ENCODE measurements at regions of chr11 and their contacts with region 1.

Region 1: GRCh38 chr11:119095066-119095880 is 6.4 kb downstream of the DPAGT1 start:
- DNase-seq: peak; percentile 99
- ATAC-seq: peak; percentile 80 to 92 (median 86)
- H3K4me3 ChIP-seq: peak overlapping the region; percentile 70
- H3K4me3 Mint-ChIP-seq: peak overlapping the region; percentile 91
- H3K27ac ChIP-seq: peak overlapping the region; percentile 84
- H3K27ac Mint-ChIP-seq: peak overlapping the region; percentile 95 to 96
- H3K4me1 ChIP-seq: peaks cover 32% of the 10 kb centered on the region
- H3K4me1 Mint-ChIP-seq: peaks cover 34 to 43% of the 10 kb centered on the region in 2 donors
- H3K27me3 ChIP-seq: no peaks in the 10 kb centered on the region
- H3K27me3 Mint-ChIP-seq: no peaks in the 10 kb centered on the region
- CTCF ChIP-seq: peak; percentile 3

Region 2: GRCh38 chr11:119030329-119031049 is 64.8 kb before region 1 on chr11 and contains the start of gene SLC37A4:
- intact Hi-C with region 1: loop called (anchors 2 kb)
- DNase-seq: peak; percentile 98 to 99
- ATAC-seq: peak; percentile 96 to 98 (median 97)
- H3K4me3 ChIP-seq: peak within 1 kb of the TSS; percentile 74
- H3K4me3 Mint-ChIP-seq: peak within 1 kb of the TSS; percentile 84
- H3K27ac ChIP-seq: peak within 1 kb of the TSS; percentile 55
- H3K27ac Mint-ChIP-seq: peak within 1 kb of the TSS; percentile 14 to 85
- H3K4me1 ChIP-seq: peaks cover 13% of the 10 kb centered on the region
- H3K4me1 Mint-ChIP-seq: peaks cover under 1 to 16% of the 10 kb centered on the region in 2 donors
- H3K27me3 ChIP-seq: no peaks in the 10 kb centered on the region
- H3K27me3 Mint-ChIP-seq: no peaks in the 10 kb centered on the region
- CTCF ChIP-seq: peak; percentile 82
- total RNA-seq, gene SLC37A4: 4.6 to 7.7 (median 6.5) TPM

Region 3: DNA sequence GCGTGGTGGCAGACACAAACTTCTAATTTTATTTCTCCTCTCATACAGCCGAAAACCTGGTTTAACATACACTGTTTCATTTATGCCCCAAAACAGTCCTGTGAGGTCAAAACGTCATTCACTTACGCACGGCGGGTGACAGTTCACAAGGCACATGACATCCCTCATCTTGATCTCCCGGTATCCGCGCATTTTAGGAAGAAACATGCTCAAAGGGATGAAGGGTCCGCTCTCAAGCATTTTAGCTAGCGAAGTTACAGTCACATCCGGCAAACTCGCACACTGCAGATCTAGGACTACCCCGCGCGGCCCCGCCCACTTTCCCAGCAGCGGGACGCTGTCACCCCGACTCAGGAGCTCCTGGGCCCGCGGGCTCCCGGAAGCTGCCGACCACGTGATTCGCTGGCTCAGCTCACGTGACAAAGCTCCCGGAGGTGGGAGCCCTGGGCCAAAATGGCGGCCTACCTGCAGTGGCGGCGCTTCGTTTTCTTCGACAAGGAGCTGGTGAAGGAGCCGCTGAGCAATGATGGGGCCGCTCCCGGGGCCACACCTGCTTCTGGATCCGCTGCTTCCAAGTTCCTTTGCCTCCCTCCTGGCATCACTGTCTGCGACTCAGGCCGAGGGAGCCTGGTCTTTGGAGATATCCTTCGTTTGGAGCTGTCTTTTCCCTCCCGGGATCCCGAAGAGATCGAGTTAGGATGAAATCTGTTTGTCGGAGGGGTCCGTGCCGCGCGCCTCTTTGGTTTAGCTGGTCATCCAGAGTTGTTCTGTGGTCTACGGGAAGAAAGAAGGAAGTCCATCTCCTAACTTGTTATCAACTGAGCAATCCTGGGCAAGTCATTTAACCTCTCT is 27.7 kb before region 1 on chr11 and contains the start of gene VPS11:
- intact Hi-C with region 1: loop called (anchors 2 kb)
- DNase-seq: peak; percentile 95 to 99
- ATAC-seq: peak; percentile 92 to 99 (median 93)
- H3K4me3 ChIP-seq: peak within 1 kb of the TSS; percentile 91
- H3K4me3 Mint-ChIP-seq: peak within 1 kb of the TSS; percentile 95
- H3K27ac ChIP-seq: peak within 1 kb of the TSS; percentile 89
- H3K27ac Mint-ChIP-seq: peak within 1 kb of the TSS; percentile 98 to 99
- H3K4me1 ChIP-seq: peaks cover 19% of the 10 kb centered on the region
- H3K4me1 Mint-ChIP-seq: peaks cover 32 to 33% of the 10 kb centered on the region in 2 donors
- H3K27me3 ChIP-seq: no peaks in the 10 kb centered on the region
- H3K27me3 Mint-ChIP-seq: no peaks in the 10 kb centered on the region
- CTCF ChIP-seq: no peak
- total RNA-seq, gene VPS11: 91.4 to 101 (median 91.7) TPM

Region 4: GRCh38 chr11:119084663-119085436 is 10.4 kb before region 1 on chr11 and contains the start of gene HMBS:
- intact Hi-C with region 1: loop called (anchors 1 kb)
- DNase-seq: peak; percentile 93 to 97
- ATAC-seq: peak; percentile 93 to 97 (median 95)
- H3K4me3 ChIP-seq: peak within 1 kb of the TSS; percentile 83
- H3K4me3 Mint-ChIP-seq: peak within 1 kb of the TSS; percentile 92
- H3K27ac ChIP-seq: peak within 1 kb of the TSS; percentile 52
- H3K27ac Mint-ChIP-seq: peak within 1 kb of the TSS; percentile 92 to 94
- H3K4me1 ChIP-seq: peaks cover 24% of the 10 kb centered on the region
- H3K4me1 Mint-ChIP-seq: peaks cover 12 to 16% of the 10 kb centered on the region in 2 donors
- H3K27me3 ChIP-seq: no peaks in the 10 kb centered on the region
- H3K27me3 Mint-ChIP-seq: no peaks in the 10 kb centered on the region
- CTCF ChIP-seq: no peak
- total RNA-seq, gene HMBS: 6.1 to 10.1 (median 6.7) TPM

Region 5: DNA sequence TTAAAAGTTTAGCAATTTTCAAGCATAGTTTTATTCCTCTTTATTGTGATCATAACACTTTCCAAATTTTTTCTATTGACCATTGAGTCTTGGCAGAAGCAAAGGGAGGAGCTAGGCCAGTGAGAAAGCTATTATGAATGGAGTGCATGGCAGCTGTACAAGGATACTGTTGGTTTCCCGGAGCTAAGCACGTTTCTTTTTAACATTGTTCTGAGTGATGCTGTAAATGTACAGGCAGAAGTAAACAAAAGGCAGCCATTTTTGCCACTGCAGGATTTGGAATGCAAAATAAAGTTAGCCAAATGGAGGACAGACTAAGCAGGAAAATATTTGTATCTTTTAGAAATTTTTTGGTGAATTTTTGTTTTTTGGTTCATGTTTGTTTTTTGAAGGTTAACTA is 127.0 kb after region 1 on chr11:
- intact Hi-C with region 1: no loop called
- DNase-seq: no peak
- ATAC-seq: no peak
- H3K4me3 ChIP-seq: no peak overlapping the region
- H3K4me3 Mint-ChIP-seq: no peak overlapping the region
- H3K27ac ChIP-seq: no peak overlapping the region
- H3K27ac Mint-ChIP-seq: peak overlapping the region; percentile 10 to 45
- H3K4me1 ChIP-seq: peaks cover 4% of the 10 kb centered on the region
- H3K4me1 Mint-ChIP-seq: peaks cover 31 to 32% of the 10 kb centered on the region in 2 donors
- H3K27me3 ChIP-seq: no peaks in the 10 kb centered on the region
- H3K27me3 Mint-ChIP-seq: no peaks in the 10 kb centered on the region
- CTCF ChIP-seq: no peak